ENCODE measurements at regions of chr1 and their contacts with region 1.

Region 1: GRCh38 chr1:211514030-211514754 is 22.2 kb upstream of the RD3 start:
- DNase-seq: peak; percentile 65
- H3K4me3 Mint-ChIP-seq: peak overlapping the region; percentile 65
- H3K27ac Mint-ChIP-seq: peak overlapping the region; percentile 44
- H3K4me1 Mint-ChIP-seq: peaks cover 30% of the 10 kb centered on the region
- H3K27me3 Mint-ChIP-seq: peaks cover 7% of the 10 kb centered on the region

Region 2: GRCh38 chr1:211133836-211134669 is 380.1 kb before region 1 on chr1 and contains the start of gene KCNH1:
- intact Hi-C with region 1: loop called (anchors 5 kb)
- DNase-seq: peak; percentile 65
- H3K4me3 Mint-ChIP-seq: peak within 1 kb of the TSS; percentile 35
- H3K27ac Mint-ChIP-seq: no peak within 1 kb of the TSS
- H3K4me1 Mint-ChIP-seq: peaks cover 5% of the 10 kb centered on the region
- H3K27me3 Mint-ChIP-seq: peaks cover 79% of the 10 kb centered on the region
- total RNA-seq, gene KCNH1: not detected in 2 replicates

Region 3: GRCh38 chr1:211247921-211248320 is 266.3 kb before region 1 on chr1:
- intact Hi-C with region 1: no loop called
- DNase-seq: no peak
- H3K4me3 Mint-ChIP-seq: no peak overlapping the region
- H3K27ac Mint-ChIP-seq: no peak overlapping the region
- H3K4me1 Mint-ChIP-seq: no peaks in the 10 kb centered on the region
- H3K27me3 Mint-ChIP-seq: peaks cover 9% of the 10 kb centered on the region

Region 4: GRCh38 chr1:211382714-211383480 is 131.3 kb before region 1 on chr1:
- intact Hi-C with region 1: loop called (anchors 1 kb)
- DNase-seq: peak; percentile 79
- H3K4me3 Mint-ChIP-seq: peak overlapping the region; percentile 85
- H3K27ac Mint-ChIP-seq: peak overlapping the region; percentile 96
- H3K4me1 Mint-ChIP-seq: peaks cover 52% of the 10 kb centered on the region
- H3K27me3 Mint-ChIP-seq: no peaks in the 10 kb centered on the region

Region 5: GRCh38 chr1:211476200-211476849 is 37.9 kb before region 1 on chr1:
- intact Hi-C with region 1: loop called (anchors 5 kb)
- DNase-seq: peak; percentile 57
- H3K4me3 Mint-ChIP-seq: no peak overlapping the region
- H3K27ac Mint-ChIP-seq: no peak overlapping the region
- H3K4me1 Mint-ChIP-seq: peaks cover 15% of the 10 kb centered on the region
- H3K27me3 Mint-ChIP-seq: peaks cover 36% of the 10 kb centered on the region

Region 6: DNA sequence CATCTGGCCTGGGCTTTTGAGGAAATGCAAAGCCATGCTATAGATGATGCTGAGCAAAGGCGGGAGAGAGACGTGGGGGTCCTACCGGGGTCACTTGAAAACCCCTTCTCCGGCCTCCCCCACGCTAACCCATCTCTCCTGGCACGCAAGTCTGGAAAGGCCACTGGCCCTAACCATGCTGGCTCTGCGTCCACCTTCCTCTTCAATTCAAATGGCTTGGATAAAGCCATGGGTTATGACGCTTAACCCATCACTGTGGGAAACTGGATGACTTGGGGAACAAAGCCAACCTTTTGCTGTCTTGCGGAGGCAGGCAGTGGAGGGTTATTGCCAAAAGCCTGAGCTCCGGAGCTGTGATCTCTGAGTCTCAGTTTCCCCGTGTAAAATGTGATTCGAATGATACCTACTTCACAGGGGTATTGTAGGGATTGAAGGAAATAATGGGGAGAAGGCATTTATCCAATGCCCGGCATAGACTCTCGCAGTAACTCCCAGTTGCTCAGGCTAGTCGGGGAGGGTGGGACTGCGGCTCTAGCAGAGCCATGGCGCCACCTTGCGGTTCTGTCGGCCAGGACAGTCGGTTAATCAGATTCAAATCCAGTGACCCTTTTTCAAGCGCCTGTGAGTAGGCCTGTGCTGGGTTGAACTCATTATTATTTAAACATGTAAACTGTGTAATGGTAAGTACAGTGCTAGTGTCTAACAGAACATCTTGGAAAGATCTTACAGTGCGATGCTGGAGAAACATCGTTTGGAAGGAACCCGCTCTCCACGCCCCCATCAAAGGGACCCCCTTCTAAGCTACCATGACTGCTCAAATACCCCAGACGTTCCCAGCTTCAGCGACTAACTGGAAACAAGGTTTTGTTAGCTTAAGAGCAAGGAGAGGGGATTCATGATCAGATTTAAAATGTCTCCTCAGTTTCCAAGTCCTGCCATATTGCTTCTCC is 140.9 kb after region 1 on chr1:
- intact Hi-C with region 1: loop called (anchors 1 kb)
- DNase-seq: peak; percentile 72
- H3K4me3 Mint-ChIP-seq: no peak overlapping the region
- H3K27ac Mint-ChIP-seq: no peak overlapping the region
- H3K4me1 Mint-ChIP-seq: peaks cover 5% of the 10 kb centered on the region
- H3K27me3 Mint-ChIP-seq: peaks cover 3% of the 10 kb centered on the region

Measured in activated T-helper 2 cell treated with anti-CD3 and anti-CD28 coated beads, Interferon-gamma antibody, Interleukin-2, Interleukin-4, amounts not matched to agents 10 μg/mL and 5 μg/mL and 100 μg/mL, durations not matched to agents 14 hours and 24 hours and 36 hours (primary cell).